Activated CD8-positive, alpha-beta T cell treated with anti-CD3 and anti-CD28 coated beads, Interleukin-2, amount 10 ng/mL, durations not matched to agents 7 days and 5 days (primary cell): ENCODE measurements at regions of chr2 and their contacts with region 1.

Region 1: DNA sequence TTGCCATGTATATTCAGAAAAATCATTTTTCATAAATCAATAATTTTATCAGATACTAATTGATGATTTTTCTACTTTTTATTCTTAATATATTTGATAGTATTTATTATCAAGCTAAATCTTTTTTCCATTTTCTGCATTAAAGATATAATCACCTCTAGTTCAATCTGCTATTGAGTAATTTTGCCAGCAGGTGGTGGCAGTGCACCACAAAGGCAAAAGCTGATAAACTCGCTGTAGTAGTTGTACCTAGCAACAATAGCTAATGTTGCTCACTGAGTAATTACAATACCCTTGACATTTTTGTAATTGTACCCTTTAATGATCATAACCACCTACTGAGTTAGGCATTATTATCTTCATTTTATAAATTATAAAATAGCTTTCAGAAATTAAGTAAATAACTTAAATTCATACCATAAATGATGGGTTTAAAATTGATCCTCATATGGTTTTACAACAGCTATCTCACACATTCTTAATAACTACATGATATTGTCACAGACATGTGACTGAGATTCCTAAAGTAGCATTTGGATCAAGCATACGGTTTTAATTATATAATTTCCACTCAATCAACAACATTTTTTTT is 52.0 kb upstream of the CALCRL start:
- DNase-seq: peak; percentile 65
- ATAC-seq: peak; percentile 57
- H3K4me3 Mint-ChIP-seq: no peak overlapping the region
- H3K27ac Mint-ChIP-seq: no peak overlapping the region
- H3K4me1 Mint-ChIP-seq: no peaks in the 10 kb centered on the region
- H3K27me3 Mint-ChIP-seq: peaks cover 2% of the 10 kb centered on the region

Region 2: GRCh38 chr2:187055463-187055862 is 444.6 kb before region 1 on chr2:
- CTCF ChIA-PET with region 1: no interaction called
- POLR2A ChIA-PET with region 1: no interaction called
- DNase-seq: no peak
- ATAC-seq: no peak
- H3K4me3 Mint-ChIP-seq: no peak overlapping the region
- H3K27ac Mint-ChIP-seq: no peak overlapping the region
- H3K4me1 Mint-ChIP-seq: no peaks in the 10 kb centered on the region
- H3K27me3 Mint-ChIP-seq: no peaks in the 10 kb centered on the region

Region 3: GRCh38 chr2:187429989-187430388 is 70.0 kb before region 1 on chr2:
- CTCF ChIA-PET with region 1: no interaction called
- POLR2A ChIA-PET with region 1: no interaction called
- DNase-seq: no peak
- ATAC-seq: no peak
- H3K4me3 Mint-ChIP-seq: no peak overlapping the region
- H3K27ac Mint-ChIP-seq: no peak overlapping the region
- H3K4me1 Mint-ChIP-seq: no peaks in the 10 kb centered on the region
- H3K27me3 Mint-ChIP-seq: no peaks in the 10 kb centered on the region

Region 4: GRCh38 chr2:187574969-187575750 is 75.1 kb after region 1 on chr2:
- CTCF ChIA-PET with region 1: interaction called, 86 read pairs
- POLR2A ChIA-PET with region 1: no interaction called
- DNase-seq: no peak
- ATAC-seq: no peak
- H3K4me3 Mint-ChIP-seq: no peak overlapping the region
- H3K27ac Mint-ChIP-seq: no peak overlapping the region
- H3K4me1 Mint-ChIP-seq: no peaks in the 10 kb centered on the region
- H3K27me3 Mint-ChIP-seq: no peaks in the 10 kb centered on the region

Region 5: DNA sequence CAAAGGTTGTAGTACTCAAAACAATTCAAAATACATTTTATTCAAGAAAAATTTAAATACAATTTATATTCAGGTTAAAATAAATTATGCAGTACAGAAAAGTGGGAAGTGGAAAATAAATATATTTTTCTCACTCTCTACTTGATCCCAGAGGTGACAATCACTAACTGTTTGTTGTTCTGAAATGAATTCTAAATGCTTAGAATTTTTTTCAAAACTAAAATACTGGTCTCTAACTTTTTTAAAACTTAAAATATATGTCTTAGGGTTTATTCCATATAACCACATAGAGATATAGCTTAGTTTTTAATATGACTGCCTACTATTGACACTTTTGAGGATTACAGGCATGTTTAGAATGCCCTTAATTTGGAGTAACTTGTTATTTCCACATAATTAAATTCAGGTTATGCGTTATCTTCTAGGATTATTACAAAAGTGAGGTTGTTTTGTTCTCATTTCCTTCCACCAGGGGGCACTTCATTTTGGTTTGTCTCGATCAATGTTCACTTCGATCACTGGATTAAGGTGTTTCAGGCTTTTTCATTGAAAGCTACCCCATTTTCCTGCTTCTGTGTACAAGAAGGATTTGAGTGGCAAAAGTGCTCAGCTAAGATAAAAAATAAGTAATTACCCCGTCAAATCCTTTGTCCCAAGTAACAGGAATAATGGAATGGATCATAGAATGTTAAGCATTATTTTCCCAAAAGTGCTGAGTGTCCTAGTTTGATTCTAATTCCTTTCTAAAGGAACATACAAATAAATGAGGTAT is 81.3 kb after region 1 on chr2:
- CTCF ChIA-PET with region 1: interaction called, 86 read pairs
- POLR2A ChIA-PET with region 1: no interaction called
- DNase-seq: peak; percentile 52
- ATAC-seq: no peak
- H3K4me3 Mint-ChIP-seq: no peak overlapping the region
- H3K27ac Mint-ChIP-seq: no peak overlapping the region
- H3K4me1 Mint-ChIP-seq: peaks cover 9% of the 10 kb centered on the region
- H3K27me3 Mint-ChIP-seq: peaks cover 3% of the 10 kb centered on the region

Region 6: DNA sequence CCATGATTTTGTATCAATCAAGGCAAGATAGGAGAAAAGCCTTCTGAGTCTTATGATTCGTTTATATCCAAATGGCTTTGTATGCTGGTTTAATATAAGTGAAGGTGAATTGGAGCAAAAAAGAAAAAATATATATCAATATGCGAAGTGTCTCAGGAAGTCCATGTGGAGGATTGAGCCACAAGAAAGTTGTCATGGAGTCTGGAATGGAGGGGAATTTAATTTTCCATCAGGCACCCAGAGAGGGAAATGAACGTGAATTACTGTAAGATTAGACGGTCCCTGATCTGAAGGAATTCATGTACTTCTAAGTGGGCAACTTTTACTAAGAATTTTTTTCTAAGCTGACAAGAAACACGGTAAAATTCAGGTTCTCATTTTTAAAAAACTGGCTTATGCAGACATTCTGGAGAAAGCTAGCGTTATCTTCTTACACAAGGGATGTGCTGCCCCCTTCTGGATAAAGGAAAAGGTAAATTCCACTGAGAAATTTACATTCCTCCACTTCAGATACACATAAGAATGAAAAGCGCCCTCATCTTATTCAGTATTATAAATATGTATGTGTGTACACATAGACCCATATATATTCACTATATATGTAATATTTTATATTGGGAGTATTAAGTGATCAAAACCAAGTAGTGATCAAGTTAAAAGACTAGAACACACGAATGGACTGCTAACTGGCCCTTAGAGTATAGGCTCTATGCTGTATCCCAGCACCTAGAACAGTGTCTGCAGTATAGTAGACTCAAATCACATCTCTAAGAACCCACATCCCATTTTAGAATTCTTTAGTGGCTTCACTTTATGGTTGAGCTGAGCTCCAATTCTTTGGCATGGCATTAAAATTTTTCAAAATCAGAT is 343.2 kb after region 1 on chr2:
- CTCF ChIA-PET with region 1: interaction called, 25 read pairs
- POLR2A ChIA-PET with region 1: no interaction called
- DNase-seq: no peak
- ATAC-seq: no peak
- H3K4me3 Mint-ChIP-seq: no peak overlapping the region
- H3K27ac Mint-ChIP-seq: no peak overlapping the region
- H3K4me1 Mint-ChIP-seq: no peaks in the 10 kb centered on the region
- H3K27me3 Mint-ChIP-seq: no peaks in the 10 kb centered on the region